Activated naive CD8-positive, alpha-beta T cell treated with anti-CD3 and anti-CD28 coated beads, Interleukin-2, amount 10 ng/mL, durations not matched to agents 7 days and 5 days (primary cell): ENCODE measurements at regions of chr11 and their contacts with region 1.

Region 1: GRCh38 chr11:62671575-62672389 is at the starts of genes LBHD1 and UQCC3:
- DNase-seq: peak; percentile 84
- ATAC-seq: peak; percentile 87
- H3K4me3 Mint-ChIP-seq: peak within 1 kb of the TSS; percentile 94
- H3K27ac Mint-ChIP-seq: peak within 1 kb of the TSS; percentile 91
- H3K4me1 Mint-ChIP-seq: peaks cover 35% of the 10 kb centered on the region
- H3K27me3 Mint-ChIP-seq: no peaks in the 10 kb centered on the region
- total RNA-seq, gene LBHD1: 23.5 to 23.6 TPM
- total RNA-seq, gene UQCC3: 6.7 to 6.8 TPM

Region 2: GRCh38 chr11:62612366-62613290 is 59.2 kb before region 1 on chr11 and contains the starts of genes EML3 and ROM1:
- POLR2A ChIA-PET with region 1: interaction called, 12 read pairs
- DNase-seq: peak; percentile 96
- ATAC-seq: peak; percentile 74
- H3K4me3 Mint-ChIP-seq: peak within 1 kb of the TSS; percentile 90
- H3K27ac Mint-ChIP-seq: peak within 1 kb of the TSS; percentile 93
- H3K4me1 Mint-ChIP-seq: peaks cover 39% of the 10 kb centered on the region
- H3K27me3 Mint-ChIP-seq: no peaks in the 10 kb centered on the region
- total RNA-seq, gene EML3: 183 to 185 TPM
- total RNA-seq, gene ROM1: 1.4 to 2.4 TPM

Region 3: DNA sequence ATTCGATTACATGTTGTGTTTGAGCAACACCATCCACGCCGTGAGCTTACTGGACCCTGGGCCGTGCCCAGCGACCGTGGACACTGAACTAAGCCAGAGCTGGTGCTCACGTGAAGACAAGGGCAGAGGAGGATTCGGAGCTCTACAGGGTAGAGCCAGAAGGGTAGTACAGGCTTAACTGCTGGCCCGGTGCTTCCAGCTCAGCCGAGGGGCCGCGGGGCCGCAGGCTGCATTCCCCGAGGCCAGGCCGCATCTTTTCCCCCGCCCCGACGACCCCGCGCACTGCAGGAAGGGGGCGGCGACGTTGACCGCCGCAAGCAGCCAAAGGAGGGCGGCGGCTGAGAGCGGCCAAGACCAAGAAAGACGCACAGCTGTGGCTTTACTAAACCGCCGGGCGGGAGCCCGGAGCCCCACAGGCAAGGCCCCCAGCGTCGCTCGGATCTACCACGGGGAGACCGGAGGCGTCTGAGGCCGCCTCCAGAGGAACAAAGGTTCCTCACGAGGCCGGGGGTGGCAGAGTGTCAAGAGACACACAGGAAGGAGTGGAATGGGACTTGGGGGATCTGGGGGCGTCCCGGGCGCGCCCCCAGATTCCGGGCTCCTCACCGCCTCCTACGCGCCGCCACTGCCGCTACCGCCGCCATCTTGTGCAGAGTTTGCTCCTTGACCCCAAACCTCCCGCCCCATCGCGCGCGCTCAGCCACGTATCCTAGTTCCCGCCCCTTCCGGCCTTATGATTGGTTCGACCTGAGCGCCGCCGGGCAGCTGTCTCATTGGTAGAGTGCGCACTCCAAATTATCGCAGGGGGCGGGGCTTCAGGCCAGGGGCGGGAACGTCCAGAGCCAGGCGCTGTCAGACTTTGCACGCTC is 25.6 kb before region 1 on chr11 and contains the start of gene GANAB:
- POLR2A ChIA-PET with region 1: interaction called, 187 read pairs
- DNase-seq: peak; percentile 96
- ATAC-seq: peak; percentile 98
- H3K4me3 Mint-ChIP-seq: peak within 1 kb of the TSS; percentile 99
- H3K27ac Mint-ChIP-seq: peak within 1 kb of the TSS; percentile 96
- H3K4me1 Mint-ChIP-seq: peaks cover 24% of the 10 kb centered on the region
- H3K27me3 Mint-ChIP-seq: no peaks in the 10 kb centered on the region
- total RNA-seq, gene GANAB: 291 to 300 TPM

Region 4: GRCh38 chr11:62694455-62695167 is 22.8 kb after region 1 on chr11:
- POLR2A ChIA-PET with region 1: interaction called, 11 read pairs
- DNase-seq: peak; percentile 68
- ATAC-seq: peak; percentile 86
- H3K4me3 Mint-ChIP-seq: no peak overlapping the region
- H3K27ac Mint-ChIP-seq: peak overlapping the region; percentile 52
- H3K4me1 Mint-ChIP-seq: peaks cover 5% of the 10 kb centered on the region
- H3K27me3 Mint-ChIP-seq: no peaks in the 10 kb centered on the region

Region 5: GRCh38 chr11:62753736-62754603 is 82.2 kb after region 1 on chr11 and contains the start of gene ZBTB3:
- POLR2A ChIA-PET with region 1: interaction called, 13 read pairs
- DNase-seq: peak; percentile 95
- ATAC-seq: peak; percentile 99
- H3K4me3 Mint-ChIP-seq: peak within 1 kb of the TSS; percentile 96
- H3K27ac Mint-ChIP-seq: peak within 1 kb of the TSS; percentile 98
- H3K4me1 Mint-ChIP-seq: peaks cover 26% of the 10 kb centered on the region
- H3K27me3 Mint-ChIP-seq: peaks cover 4% of the 10 kb centered on the region
- total RNA-seq, gene ZBTB3: 14.0 to 17.1 TPM